ENCODE measurements at regions of chr12 and their contacts with region 1.

Region 1: DNA sequence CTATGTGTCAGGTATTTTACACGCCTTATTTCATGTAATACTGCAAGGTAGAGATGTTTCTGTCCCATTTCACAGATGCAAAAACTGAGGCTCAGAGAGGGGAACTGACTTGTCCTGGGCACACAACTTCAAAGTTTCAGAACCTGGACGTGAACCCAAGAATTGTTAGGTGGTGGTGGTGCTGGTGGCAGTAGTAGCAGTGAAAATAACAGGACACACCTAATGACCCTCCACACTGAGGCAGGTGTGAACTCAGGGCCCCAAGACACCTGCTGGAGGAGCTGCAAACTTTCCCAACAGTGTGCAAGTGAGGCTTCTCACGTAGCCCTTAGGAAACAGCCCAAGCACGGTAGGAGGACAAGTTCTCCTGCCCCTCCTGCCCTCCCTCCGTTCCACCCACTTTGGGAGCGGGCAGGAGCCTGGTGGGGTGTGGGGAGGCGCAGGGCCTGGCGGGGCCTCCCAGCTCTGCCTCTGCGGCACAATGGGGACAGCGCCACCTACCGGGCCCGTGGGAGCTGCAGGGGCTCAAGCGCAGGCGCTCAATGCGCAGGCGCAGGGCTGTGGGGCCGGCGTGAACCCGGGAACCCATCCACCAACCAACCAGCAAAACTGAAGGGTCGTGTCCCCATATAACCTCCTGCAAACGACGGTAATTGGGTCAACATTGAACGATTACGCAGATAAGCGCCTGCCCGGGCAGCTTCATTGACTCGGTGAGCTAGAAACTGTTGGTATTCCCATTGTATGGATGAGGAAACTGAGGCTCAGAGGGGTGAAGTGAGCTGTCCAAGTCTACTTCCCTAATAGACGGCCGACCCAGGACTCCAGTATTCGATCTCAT is 12.0 kb upstream of the TRPV4 start:
- DNase-seq: peak; percentile 42
- ATAC-seq: peak; percentile 97
- H3K4me3 ChIP-seq: peak overlapping the region; percentile 13; the same call in 1 of the 2 replicates
- H3K27ac ChIP-seq: no peak overlapping the region
- H3K4me1 ChIP-seq: peaks cover 8% of the 10 kb centered on the region
- H3K27me3 ChIP-seq: no peaks in the 10 kb centered on the region
- CTCF ChIP-seq: peak; percentile 98 to 99 (median 98); a peak in 5 of 6 replicates
- EP300 ChIP-seq: no peak
- POLR2A ChIP-seq: no peak
- RAD21 ChIP-seq: peak; percentile 77

Region 2: GRCh38 chr12:109518820-109519665 is 326.2 kb before region 1 on chr12:
- CTCF ChIA-PET with region 1: interaction called, 9 read pairs
- POLR2A ChIA-PET with region 1: no interaction called
- RAD21 ChIA-PET with region 1: no interaction called
- SMC1A ChIA-PET with region 1: no interaction called
- in situ Hi-C with region 1: no loop called
- intact Hi-C with region 1: loop called (anchors 5 kb)
- DNase-seq: no peak
- ATAC-seq: peak; percentile 83
- H3K4me3 ChIP-seq: no peak overlapping the region
- H3K27ac ChIP-seq: no peak overlapping the region
- H3K4me1 ChIP-seq: no peaks in the 10 kb centered on the region
- H3K27me3 ChIP-seq: no peaks in the 10 kb centered on the region
- CTCF ChIP-seq: peak; percentile 71 to 81 (median 80)
- EP300 ChIP-seq: no peak
- POLR2A ChIP-seq: no peak
- RAD21 ChIP-seq: peak; percentile 56

Region 3: DNA sequence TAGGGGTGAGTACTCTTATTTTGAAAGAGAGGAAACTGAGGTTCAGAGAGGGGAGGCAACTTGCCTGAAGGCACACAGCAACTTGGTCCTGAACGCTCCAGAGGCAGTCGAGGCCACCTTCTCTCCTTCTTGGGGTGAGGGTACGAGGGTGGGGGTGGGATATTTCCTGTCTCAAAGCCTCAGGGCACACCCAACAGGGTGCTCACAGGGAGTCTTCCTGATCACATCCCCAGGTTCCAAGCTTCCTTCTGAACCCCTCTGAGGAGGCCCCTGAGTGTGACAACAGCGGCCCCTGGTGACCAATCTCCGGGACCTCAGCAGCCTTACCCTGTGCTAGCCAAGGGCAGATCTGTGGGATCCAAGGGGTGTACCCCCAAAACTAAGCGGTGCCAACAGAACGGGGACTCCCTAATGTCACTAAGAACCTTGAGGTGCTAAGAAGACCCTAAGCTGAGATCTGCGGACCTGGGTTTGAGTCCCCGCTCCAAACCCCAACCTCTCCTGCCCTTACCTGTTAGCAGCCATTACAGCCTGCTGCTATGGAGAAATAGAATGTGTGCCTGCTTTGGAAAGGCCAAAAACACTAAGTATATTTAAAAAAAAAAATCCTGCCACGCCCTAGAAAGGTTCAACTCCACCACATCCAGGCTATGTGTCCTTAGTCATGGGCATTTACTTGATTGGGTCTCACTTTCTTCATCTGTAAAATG is 69.9 kb before region 1 on chr12:
- CTCF ChIA-PET with region 1: interaction called, 11 read pairs
- POLR2A ChIA-PET with region 1: no interaction called
- RAD21 ChIA-PET with region 1: interaction called, 4 read pairs
- SMC1A ChIA-PET with region 1: interaction called, 4 read pairs
- in situ Hi-C with region 1: no loop called
- intact Hi-C with region 1: no loop called
- DNase-seq: no peak
- ATAC-seq: peak; percentile 87
- H3K4me3 ChIP-seq: no peak overlapping the region
- H3K27ac ChIP-seq: no peak overlapping the region
- H3K4me1 ChIP-seq: no peaks in the 10 kb centered on the region
- H3K27me3 ChIP-seq: no peaks in the 10 kb centered on the region
- CTCF ChIP-seq: peak; percentile 88 to 94 (median 89)
- EP300 ChIP-seq: no peak
- POLR2A ChIP-seq: no peak
- RAD21 ChIP-seq: peak; percentile 89

Region 4: GRCh38 chr12:109804820-109805761 is 40.1 kb before region 1 on chr12:
- CTCF ChIA-PET with region 1: interaction called, 139 read pairs
- POLR2A ChIA-PET with region 1: no interaction called
- RAD21 ChIA-PET with region 1: interaction called, 12 read pairs
- SMC1A ChIA-PET with region 1: interaction called, 40 read pairs
- in situ Hi-C with region 1: no loop called
- intact Hi-C with region 1: loop called (anchors 1 kb)
- DNase-seq: no peak
- ATAC-seq: peak; percentile 91
- H3K4me3 ChIP-seq: no peak overlapping the region
- H3K27ac ChIP-seq: no peak overlapping the region
- H3K4me1 ChIP-seq: no peaks in the 10 kb centered on the region
- H3K27me3 ChIP-seq: no peaks in the 10 kb centered on the region
- CTCF ChIP-seq: peak; percentile 88 to 98 (median 95)
- EP300 ChIP-seq: no peak
- POLR2A ChIP-seq: no peak
- RAD21 ChIP-seq: peak; percentile 82

Region 5: GRCh38 chr12:109828236-109828550 is 17.0 kb before region 1 on chr12:
- CTCF ChIA-PET with region 1: interaction called, 18 read pairs
- POLR2A ChIA-PET with region 1: no interaction called
- RAD21 ChIA-PET with region 1: no interaction called
- SMC1A ChIA-PET with region 1: no interaction called
- in situ Hi-C with region 1: no loop called
- intact Hi-C with region 1: no loop called
- DNase-seq: no peak
- ATAC-seq: peak; percentile 26; the same call in 2 of the 3 replicates
- H3K4me3 ChIP-seq: no peak overlapping the region
- H3K27ac ChIP-seq: no peak overlapping the region
- H3K4me1 ChIP-seq: no peaks in the 10 kb centered on the region
- H3K27me3 ChIP-seq: peaks cover 0 to 5% of the 10 kb centered on the region in 2 experiments; a peak in 3 of 4 replicates
- CTCF ChIP-seq: no peak
- EP300 ChIP-seq: no peak
- POLR2A ChIP-seq: no peak
- RAD21 ChIP-seq: no peak

Region 6: DNA sequence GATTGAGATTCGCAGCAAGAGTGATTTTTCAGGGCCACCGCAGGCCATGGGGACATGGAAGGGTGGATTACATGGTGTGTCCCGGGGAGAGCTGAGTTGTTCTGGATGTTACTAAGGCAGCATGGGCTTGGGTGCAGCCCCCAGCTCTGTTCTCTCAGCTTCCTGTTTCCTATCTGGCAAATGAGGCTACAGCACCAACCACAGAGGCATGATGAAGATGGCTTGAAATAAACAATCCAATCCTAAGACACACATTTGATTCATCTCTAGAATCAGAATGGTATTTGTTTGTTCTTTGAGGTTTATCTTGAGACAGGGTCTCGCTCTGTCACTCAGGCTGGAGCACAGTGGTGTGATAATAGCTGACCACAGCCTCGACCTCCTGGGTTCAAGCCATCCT is 13.6 kb after region 1 on chr12:
- CTCF ChIA-PET with region 1: interaction called, 39 read pairs
- POLR2A ChIA-PET with region 1: no interaction called
- RAD21 ChIA-PET with region 1: interaction called, 3 read pairs
- SMC1A ChIA-PET with region 1: interaction called, 7 read pairs
- in situ Hi-C with region 1: no loop called
- intact Hi-C with region 1: no loop called
- DNase-seq: no peak
- ATAC-seq: no peak
- H3K4me3 ChIP-seq: no peak overlapping the region
- H3K27ac ChIP-seq: no peak overlapping the region
- H3K4me1 ChIP-seq: no peaks in the 10 kb centered on the region
- H3K27me3 ChIP-seq: no peaks in the 10 kb centered on the region
- CTCF ChIP-seq: no peak
- EP300 ChIP-seq: no peak
- POLR2A ChIP-seq: no peak
- RAD21 ChIP-seq: no peak

Region 7: DNA sequence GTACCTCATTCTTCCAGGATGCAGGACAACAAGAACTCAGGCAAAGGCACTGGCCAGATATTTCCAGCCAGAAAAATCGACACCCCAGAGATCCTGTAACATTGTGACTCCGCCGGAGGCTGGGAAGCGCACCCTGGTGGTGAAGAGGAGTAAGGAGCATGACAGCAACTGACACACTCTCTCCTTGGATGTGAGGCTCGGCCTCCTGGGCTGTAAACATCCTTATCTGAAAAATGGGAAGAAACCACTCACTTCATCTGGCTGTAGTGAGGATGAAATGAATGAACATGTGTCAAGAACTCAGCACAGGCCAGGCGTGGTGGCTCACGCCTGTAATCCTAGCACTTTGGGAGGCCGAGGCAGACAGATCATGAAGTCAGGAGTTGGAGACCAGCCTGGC is 82.4 kb after region 1 on chr12:
- CTCF ChIA-PET with region 1: interaction called, 3 read pairs
- POLR2A ChIA-PET with region 1: no interaction called
- RAD21 ChIA-PET with region 1: no interaction called
- SMC1A ChIA-PET with region 1: interaction called, 4 read pairs
- in situ Hi-C with region 1: no loop called
- intact Hi-C with region 1: loop called (anchors 5 kb)
- DNase-seq: no peak
- ATAC-seq: peak; percentile 82
- H3K4me3 ChIP-seq: no peak overlapping the region
- H3K27ac ChIP-seq: no peak overlapping the region
- H3K4me1 ChIP-seq: no peaks in the 10 kb centered on the region
- H3K27me3 ChIP-seq: no peaks in the 10 kb centered on the region
- CTCF ChIP-seq: peak; percentile 41 to 59 (median 55)
- EP300 ChIP-seq: no peak
- POLR2A ChIP-seq: no peak
- RAD21 ChIP-seq: peak; percentile 43

Measured in GM12878 (cell line).